ENCODE measurements at regions of chr17 and their contacts with region 1.

Region 1: GRCh38 chr17:16491703-16492612 is at the start of gene LRRC75A:
- DNase-seq: peak; percentile 74

Region 2: DNA sequence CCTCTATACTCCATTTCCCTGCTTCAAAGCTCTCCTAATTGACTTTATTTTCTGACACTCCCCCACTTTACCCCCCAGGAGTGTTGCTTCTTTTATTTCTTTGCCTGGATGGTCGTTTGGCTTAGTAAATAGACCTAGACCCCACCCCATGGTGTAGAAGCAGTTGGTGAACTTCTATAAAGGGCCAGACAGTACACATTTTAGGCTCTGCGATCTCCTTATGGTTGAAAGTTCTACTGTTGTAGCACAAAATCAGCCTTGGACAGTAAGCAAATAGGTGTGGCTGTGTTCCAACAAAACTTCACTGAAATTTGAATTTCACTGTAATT is 45.1 kb after region 1 on chr17:
- CTCF ChIA-PET with region 1: no interaction called
- POLR2A ChIA-PET with region 1: interaction called, 10 read pairs
- DNase-seq: no peak